ENCODE measurements at regions of chr17 and their contacts with region 1.

Region 1: GRCh38 chr17:78798695-78799559 is 16.9 kb upstream of the CYTH1 start:
- DNase-seq: no peak
- ATAC-seq: peak in 6 of 8 donors; percentile 18 to 44 (median 30)
- H3K4me3 ChIP-seq: no peak overlapping the region
- H3K27ac ChIP-seq: no peak overlapping the region
- H3K4me1 ChIP-seq: peaks cover 3 to 39% (median 26%) of the 10 kb centered on the region in 9 donors
- H3K27me3 ChIP-seq: no peaks in the 10 kb centered on the region
- CTCF ChIP-seq: peak in 8 of 9 donors; percentile 24 to 63 (median 56)

Region 2: DNA sequence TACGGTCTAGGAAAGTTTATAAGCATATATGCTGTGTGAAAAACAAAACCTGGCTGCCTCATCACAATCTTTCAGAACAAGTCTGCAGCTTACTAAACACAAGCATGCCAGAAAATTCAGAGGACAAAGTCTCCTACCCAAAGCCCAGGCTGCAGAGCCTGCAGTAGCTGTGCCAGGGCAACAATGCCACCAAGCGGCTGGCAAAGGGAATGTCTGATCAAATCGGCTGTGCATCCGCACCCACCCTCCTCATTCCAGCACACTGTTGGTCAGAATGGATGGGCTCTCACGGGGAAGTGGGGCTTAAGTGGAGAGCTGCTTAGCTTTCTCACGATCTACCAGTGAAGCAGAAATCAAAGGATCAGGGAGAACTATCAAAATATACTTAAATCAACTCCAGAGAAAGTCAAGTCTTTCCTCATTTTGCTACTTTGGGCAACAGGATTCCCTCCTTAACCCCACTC is 90.4 kb before region 1 on chr17:
- intact Hi-C with region 1: loop called in 3 of 10 experiments (anchors 5 kb)
- DNase-seq: peak; percentile 58 to 64
- ATAC-seq: peak; percentile 75 to 89 (median 88)
- H3K4me3 ChIP-seq: no peak overlapping the region
- H3K27ac ChIP-seq: peak overlapping the region in 2 of 10 donors; percentile 9 to 38
- H3K4me1 ChIP-seq: peaks cover 0 to 51% (median 31%) of the 10 kb centered on the region in 9 donors
- H3K27me3 ChIP-seq: no peaks in the 10 kb centered on the region
- CTCF ChIP-seq: peak; percentile 74 to 91 (median 83)

Region 3: GRCh38 chr17:78766743-78767294 is 32.1 kb before region 1 on chr17:
- intact Hi-C with region 1: loop called in 1 of 10 experiments (anchors 2 kb)
- DNase-seq: no peak
- ATAC-seq: no peak
- H3K4me3 ChIP-seq: no peak overlapping the region
- H3K27ac ChIP-seq: peak overlapping the region in 1 of 10 donors; percentile 9
- H3K4me1 ChIP-seq: peaks cover 0 to 93% (median 59%) of the 10 kb centered on the region in 9 donors
- H3K27me3 ChIP-seq: no peaks in the 10 kb centered on the region
- CTCF ChIP-seq: no peak

Measured in heart right ventricle (tissue), 16 donors.